Vagina (tissue), 2 donors: ENCODE measurements at regions of chr11 and their contacts with region 1.

Region 1: DNA sequence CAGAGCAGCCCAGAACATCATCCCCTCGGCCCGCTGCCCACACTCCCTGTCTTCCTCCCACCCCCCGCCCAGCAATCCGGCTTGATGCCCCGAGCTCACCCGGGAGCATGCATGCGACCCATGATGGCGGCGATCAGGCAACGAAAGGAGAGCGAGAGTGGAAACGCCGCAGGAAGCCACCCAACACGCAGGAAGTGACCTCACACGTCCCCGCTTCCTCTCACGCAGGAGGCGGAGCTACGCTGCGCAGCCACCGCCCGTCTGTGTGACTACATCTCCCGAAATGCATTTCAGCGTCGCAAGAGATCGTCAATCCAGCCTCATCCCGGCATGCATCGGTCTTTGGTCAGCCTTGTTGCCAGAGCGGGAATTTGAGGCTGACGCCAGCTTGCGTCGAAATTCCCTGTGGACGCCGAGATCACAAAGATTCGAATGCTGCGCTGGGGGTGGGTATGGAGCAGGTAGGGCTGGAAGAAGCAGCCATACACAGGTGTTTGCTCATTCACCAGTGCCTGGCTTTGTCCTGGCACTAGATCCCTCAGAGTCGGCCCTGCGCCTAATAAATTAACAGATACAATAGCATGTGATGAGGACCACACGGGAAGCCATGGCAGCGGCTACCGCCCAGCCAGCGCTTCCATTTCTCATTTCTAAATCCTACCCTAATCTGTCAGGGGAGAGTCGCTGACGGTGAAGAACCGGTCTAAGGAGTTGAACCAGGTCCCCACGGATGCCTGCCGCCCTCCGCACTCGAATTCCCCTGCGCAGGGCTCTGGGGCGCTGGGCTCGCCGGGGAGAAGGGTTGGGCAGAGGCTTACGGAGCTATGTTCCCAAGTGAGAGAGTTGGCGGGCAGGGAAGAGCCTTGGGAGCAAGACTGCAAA is at the start of gene RPS13:
- DNase-seq: peak; percentile 98 to 99
- H3K4me3 ChIP-seq: peak within 1 kb of the TSS; percentile 91 to 96
- H3K27ac ChIP-seq: peak within 1 kb of the TSS; percentile 92
- H3K4me1 ChIP-seq: peaks cover 35% of the 10 kb centered on the region
- H3K27me3 ChIP-seq: no peaks in the 10 kb centered on the region
- CTCF ChIP-seq: no peak
- POLR2A ChIP-seq: peak in 1 of 2 donors; percentile 27
- total RNA-seq, gene RPS13: 1,999 TPM

Region 2: DNA sequence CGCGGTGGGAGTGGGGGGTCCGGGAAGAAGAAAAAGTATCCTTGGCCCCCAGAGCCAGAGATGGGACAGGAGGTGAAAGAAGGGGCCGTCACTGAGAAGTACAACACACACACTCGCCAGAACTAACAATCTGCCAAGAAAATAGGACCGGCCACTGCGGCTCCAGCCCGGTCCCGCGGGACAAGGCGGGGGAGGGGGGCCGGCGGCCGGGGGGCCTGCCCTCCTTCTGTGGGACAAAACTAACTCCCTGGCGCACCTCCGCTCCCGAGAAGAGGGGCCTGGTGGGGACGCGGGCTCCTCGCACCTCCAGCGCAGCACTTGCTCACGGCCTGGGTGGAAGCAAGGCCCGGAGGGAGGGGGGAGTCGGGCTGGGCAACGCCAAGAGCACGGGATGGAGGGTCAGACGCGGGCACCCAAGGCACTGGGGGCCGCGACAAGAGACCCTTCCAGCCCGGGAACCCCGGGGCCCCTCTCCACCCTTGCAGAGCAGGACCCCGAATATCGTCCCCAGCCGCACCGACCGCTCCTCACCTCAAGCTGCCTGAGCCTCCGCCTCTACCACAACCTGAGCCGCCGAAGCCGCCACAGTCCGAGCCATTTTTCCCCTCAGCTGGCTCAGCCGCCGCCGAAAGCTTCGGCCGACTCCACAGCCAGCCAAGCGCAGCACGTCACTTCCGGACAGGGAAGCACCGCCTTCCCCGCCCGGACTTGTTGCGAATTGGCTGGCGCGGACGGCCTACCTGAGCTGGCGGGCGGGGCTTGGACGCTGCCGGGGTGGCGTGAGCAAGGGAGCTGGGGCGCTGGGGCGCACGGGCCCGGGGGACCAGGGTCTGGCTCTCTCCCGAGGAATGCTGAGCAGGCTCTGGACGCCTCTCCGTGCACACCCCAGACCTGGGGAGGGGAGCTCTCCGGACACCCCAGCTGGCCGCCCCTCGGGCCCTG is 129.8 kb after region 1 on chr11 and contains the start of gene PIK3C2A:
- intact Hi-C with region 1: loop called (anchors 5 kb)
- DNase-seq: peak; percentile 95 to 98
- H3K4me3 ChIP-seq: peak within 1 kb of the TSS; percentile 89 to 93
- H3K27ac ChIP-seq: peak within 1 kb of the TSS; percentile 96
- H3K4me1 ChIP-seq: peaks cover 35% of the 10 kb centered on the region
- H3K27me3 ChIP-seq: no peaks in the 10 kb centered on the region
- CTCF ChIP-seq: no peak
- POLR2A ChIP-seq: peak; percentile 61 to 89
- total RNA-seq, gene PIK3C2A: 52.1 TPM

Region 3: DNA sequence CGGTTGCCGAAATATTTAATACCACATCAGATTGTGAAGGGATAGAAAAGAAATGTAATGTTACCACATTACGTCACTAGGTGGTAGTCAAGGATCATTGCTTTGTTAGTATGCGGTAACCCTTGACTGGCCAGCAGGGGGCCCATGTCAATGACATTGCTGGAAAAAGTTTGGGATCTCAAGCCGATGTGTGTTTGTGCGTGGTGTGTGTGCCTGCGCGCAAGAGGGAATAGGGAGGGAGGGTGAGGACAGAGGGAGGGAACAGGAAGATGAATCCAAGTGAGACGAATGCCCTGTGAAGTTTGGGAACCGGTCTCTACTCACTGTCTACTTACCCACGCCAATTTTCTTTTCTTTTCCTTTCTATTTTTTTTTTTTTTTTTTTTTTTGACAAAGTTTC is 1993.5 kb after region 1 on chr11:
- intact Hi-C with region 1: no loop called
- DNase-seq: no peak
- H3K4me3 ChIP-seq: no peak overlapping the region
- H3K27ac ChIP-seq: no peak overlapping the region
- H3K4me1 ChIP-seq: peaks cover 4% of the 10 kb centered on the region
- H3K27me3 ChIP-seq: no peaks in the 10 kb centered on the region
- CTCF ChIP-seq: peak; percentile 86 to 96 (median 90)
- POLR2A ChIP-seq: no peak